ENCODE measurements at regions of chr2 and their contacts with region 1.

Region 1: DNA sequence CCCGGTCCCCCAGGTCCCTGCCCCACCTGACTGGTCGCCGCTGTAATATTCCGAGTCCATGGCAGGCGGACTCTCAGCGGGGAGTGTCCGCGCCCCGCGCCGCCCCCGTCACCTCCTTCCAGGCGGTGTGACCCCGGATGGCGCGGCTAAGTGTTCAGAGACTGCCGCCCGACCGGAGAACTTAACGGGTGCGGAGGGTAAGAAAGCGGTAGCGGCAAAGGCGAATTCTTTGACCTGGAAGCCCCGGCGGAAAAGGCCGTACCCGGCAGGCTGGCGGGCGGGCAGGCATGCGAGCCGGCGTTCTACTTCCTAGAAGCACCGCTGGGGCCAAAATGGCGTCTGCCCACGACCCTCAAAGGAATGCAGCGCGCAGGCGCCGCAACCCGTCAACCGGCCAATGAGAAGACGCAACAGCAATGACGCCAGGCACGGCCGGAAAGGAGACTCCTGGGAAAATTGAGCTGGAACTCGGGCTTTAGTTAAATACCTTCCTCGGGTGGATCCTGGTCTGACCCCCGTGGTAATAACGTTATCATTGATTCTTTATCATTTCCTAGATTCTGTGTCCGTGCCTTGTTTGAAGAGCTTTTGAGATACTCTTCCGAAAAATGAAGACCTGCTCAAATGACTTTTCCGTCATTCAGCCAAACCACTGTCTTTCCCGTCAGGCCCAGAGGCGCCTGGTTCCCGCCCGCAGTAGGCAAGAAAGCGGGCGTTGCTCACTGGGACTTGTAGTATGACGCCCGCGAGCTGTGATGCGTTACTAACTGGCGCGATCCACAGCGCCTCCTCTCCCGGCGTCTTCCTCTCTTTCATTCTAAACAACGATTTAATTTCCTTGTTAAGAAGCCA is at the start of gene IWS1:
- DNase-seq: peak; percentile 83 to 98 (median 89)
- ATAC-seq: peak; percentile 91
- H3K4me3 ChIP-seq: peak within 1 kb of the TSS; percentile 91
- H3K4me3 Mint-ChIP-seq: peak within 1 kb of the TSS; percentile 96
- H3K27ac ChIP-seq: peak within 1 kb of the TSS; percentile 90 to 95
- H3K27ac Mint-ChIP-seq: peak within 1 kb of the TSS; percentile 99
- H3K4me1 ChIP-seq: peaks cover 31% of the 10 kb centered on the region
- H3K4me1 Mint-ChIP-seq: peaks cover 40% of the 10 kb centered on the region
- H3K27me3 ChIP-seq: no peaks in the 10 kb centered on the region
- H3K27me3 Mint-ChIP-seq: no peaks in the 10 kb centered on the region
- CTCF ChIP-seq: no peak
- total RNA-seq, gene IWS1: 24.9 to 26.0 TPM

Region 2: DNA sequence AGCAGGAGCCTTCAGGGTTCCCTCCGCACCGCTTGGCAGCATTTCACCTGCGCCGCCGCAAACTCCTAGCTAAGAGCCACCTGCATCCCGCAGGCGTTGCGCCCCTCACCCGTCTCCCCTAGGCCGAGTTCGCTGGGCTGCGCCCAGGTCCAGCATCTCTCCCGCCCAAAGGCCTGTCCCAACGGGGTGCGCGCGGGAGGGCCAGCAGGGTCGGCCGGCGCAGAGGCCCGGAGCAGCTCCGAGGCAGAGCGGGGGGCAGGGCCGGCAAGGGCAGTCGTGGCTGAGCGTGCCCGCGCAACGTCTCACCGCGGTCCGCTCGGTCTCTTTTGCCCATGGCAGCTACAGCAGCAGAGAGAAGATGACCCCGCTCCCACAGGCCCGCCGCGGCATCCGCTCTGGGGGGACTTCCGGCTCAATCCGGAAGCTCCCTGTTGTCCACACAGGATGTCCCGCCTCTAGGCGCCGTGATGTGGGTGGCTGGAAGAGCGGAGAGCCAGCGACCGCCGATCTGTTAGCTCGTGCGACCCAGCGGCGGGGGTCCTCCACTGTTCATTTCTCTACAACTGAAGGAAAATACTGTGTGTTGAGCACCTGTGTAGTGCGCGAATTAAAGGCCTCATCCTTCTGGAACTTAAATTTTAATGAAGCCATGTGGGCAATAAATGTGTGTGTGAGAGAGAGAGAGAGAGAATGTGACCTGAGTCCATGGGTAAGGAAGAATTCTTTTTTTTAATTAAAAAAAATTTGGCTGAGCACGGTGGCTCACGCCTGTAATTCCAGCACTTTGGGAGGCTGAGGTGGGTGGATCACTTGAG is 232.4 kb before region 1 on chr2 and contains the start of gene ERCC3:
- CTCF ChIA-PET with region 1: no interaction called
- POLR2A ChIA-PET with region 1: interaction called, 10 read pairs
- intact Hi-C with region 1: no loop called
- DNase-seq: peak; percentile 56 to 88 (median 74)
- ATAC-seq: peak; percentile 86
- H3K4me3 ChIP-seq: peak within 1 kb of the TSS; percentile 93
- H3K4me3 Mint-ChIP-seq: peak within 1 kb of the TSS; percentile 93
- H3K27ac ChIP-seq: peak within 1 kb of the TSS; percentile 60 to 69
- H3K27ac Mint-ChIP-seq: peak within 1 kb of the TSS; percentile 79
- H3K4me1 ChIP-seq: peaks cover 20% of the 10 kb centered on the region
- H3K4me1 Mint-ChIP-seq: peaks cover 36% of the 10 kb centered on the region
- H3K27me3 ChIP-seq: no peaks in the 10 kb centered on the region
- H3K27me3 Mint-ChIP-seq: no peaks in the 10 kb centered on the region
- CTCF ChIP-seq: no peak
- total RNA-seq, gene ERCC3: 40.0 to 44.0 TPM

Region 3: DNA sequence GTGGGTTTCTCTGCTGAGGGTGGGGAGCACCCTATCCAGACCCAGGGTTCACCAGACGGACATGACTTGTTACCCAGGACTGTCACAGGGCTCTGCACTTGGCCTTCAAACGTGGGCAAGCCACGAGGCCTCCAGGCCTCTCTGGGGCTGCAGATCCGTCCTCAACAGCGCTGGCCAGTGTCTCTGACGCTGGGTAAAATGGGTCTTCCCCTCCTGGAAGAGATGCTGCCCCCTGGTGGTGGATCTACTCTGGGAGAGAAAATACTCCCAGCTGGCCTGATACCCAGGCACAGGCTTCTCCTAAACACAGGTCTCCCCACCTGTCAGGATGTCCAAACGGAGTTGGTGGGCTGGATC is 123.3 kb after region 1 on chr2:
- CTCF ChIA-PET with region 1: interaction called, 3 read pairs
- POLR2A ChIA-PET with region 1: interaction called, 3 read pairs
- intact Hi-C with region 1: loop called (anchors 5 kb)
- DNase-seq: peak; percentile 74 to 97 (median 85)
- ATAC-seq: peak; percentile 81
- H3K4me3 ChIP-seq: no peak overlapping the region
- H3K4me3 Mint-ChIP-seq: peak overlapping the region; percentile 56
- H3K27ac ChIP-seq: no peak overlapping the region
- H3K27ac Mint-ChIP-seq: peak overlapping the region; percentile 81
- H3K4me1 ChIP-seq: peaks cover 20% of the 10 kb centered on the region
- H3K4me1 Mint-ChIP-seq: peaks cover 35% of the 10 kb centered on the region
- H3K27me3 ChIP-seq: no peaks in the 10 kb centered on the region
- H3K27me3 Mint-ChIP-seq: no peaks in the 10 kb centered on the region
- CTCF ChIP-seq: peak; percentile 88

Region 4: GRCh38 chr2:127857265-127857808 is 331.0 kb after region 1 on chr2:
- CTCF ChIA-PET with region 1: no interaction called
- POLR2A ChIA-PET with region 1: no interaction called
- intact Hi-C with region 1: loop called in 1 of 2 experiments (anchors 1 kb)
- DNase-seq: peak in 5 of 14 experiments; percentile 8 to 43 (median 14)
- ATAC-seq: peak; percentile 5
- H3K4me3 ChIP-seq: peak overlapping the region; percentile 92
- H3K4me3 Mint-ChIP-seq: peak overlapping the region; percentile 88
- H3K27ac ChIP-seq: peak overlapping the region; percentile 65 to 70
- H3K27ac Mint-ChIP-seq: peak overlapping the region; percentile 67
- H3K4me1 ChIP-seq: peaks cover 42% of the 10 kb centered on the region
- H3K4me1 Mint-ChIP-seq: peaks cover 49% of the 10 kb centered on the region
- H3K27me3 ChIP-seq: no peaks in the 10 kb centered on the region
- H3K27me3 Mint-ChIP-seq: no peaks in the 10 kb centered on the region
- CTCF ChIP-seq: no peak

Region 5: DNA sequence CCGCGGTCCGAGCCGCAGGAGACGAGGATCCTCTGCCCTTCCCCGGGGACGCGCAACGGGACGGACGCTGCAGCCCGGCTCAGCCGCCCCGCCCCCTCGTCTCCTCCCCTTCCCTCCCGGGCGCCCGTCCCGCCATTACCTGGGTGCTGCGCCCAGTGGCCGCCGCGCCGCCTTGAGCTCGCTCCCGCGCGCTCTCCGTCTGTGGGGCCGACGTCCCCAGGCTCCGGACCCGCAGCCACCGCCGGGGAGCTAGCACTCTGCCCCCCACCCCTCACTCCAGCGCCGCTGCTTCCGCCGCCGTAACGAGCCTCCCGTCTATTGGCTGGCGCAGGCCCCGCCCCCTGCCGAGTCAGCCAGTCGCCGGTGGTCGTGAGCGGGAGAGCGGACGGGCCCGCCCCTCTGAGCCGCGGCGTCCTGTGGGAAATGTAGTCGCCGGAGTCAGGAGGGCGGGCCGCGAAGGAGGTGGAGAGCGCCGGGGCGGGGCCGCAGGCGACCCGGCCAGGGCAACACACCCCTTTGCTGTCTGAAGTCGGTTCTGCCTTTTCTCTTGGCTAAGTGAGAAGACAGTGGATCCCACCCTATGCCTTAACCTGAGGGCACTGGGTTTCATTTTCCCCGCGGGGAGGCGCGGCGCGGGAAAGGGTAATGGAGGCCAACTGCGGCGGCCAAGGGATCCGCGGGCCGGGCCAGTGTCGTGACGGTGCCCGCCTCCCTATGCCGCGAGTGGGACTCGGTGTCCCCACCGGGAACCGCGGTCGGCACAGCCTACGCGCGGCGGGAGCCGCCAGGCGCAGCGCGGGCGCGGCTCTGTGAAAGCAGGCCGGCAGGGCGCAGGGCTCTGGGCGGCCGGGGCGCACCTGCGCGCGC is 501.7 kb after region 1 on chr2 and contains the start of gene SAP130:
- CTCF ChIA-PET with region 1: no interaction called
- POLR2A ChIA-PET with region 1: interaction called, 5 read pairs
- intact Hi-C with region 1: loop called (anchors 5 kb)
- DNase-seq: peak; percentile 96 to 99 (median 98)
- ATAC-seq: peak; percentile 76
- H3K4me3 ChIP-seq: peak within 1 kb of the TSS; percentile 77
- H3K4me3 Mint-ChIP-seq: peak within 1 kb of the TSS; percentile 99
- H3K27ac ChIP-seq: peak within 1 kb of the TSS; percentile 85 to 89
- H3K27ac Mint-ChIP-seq: peak within 1 kb of the TSS; percentile 96
- H3K4me1 ChIP-seq: peaks cover 15% of the 10 kb centered on the region
- H3K4me1 Mint-ChIP-seq: peaks cover 30% of the 10 kb centered on the region
- H3K27me3 ChIP-seq: no peaks in the 10 kb centered on the region
- H3K27me3 Mint-ChIP-seq: no peaks in the 10 kb centered on the region
- CTCF ChIP-seq: no peak
- total RNA-seq, gene SAP130: 19.2 to 21.0 TPM